B cell (primary cell): ENCODE measurements at regions of chr1 and their contacts with region 1.

Region 1: DNA sequence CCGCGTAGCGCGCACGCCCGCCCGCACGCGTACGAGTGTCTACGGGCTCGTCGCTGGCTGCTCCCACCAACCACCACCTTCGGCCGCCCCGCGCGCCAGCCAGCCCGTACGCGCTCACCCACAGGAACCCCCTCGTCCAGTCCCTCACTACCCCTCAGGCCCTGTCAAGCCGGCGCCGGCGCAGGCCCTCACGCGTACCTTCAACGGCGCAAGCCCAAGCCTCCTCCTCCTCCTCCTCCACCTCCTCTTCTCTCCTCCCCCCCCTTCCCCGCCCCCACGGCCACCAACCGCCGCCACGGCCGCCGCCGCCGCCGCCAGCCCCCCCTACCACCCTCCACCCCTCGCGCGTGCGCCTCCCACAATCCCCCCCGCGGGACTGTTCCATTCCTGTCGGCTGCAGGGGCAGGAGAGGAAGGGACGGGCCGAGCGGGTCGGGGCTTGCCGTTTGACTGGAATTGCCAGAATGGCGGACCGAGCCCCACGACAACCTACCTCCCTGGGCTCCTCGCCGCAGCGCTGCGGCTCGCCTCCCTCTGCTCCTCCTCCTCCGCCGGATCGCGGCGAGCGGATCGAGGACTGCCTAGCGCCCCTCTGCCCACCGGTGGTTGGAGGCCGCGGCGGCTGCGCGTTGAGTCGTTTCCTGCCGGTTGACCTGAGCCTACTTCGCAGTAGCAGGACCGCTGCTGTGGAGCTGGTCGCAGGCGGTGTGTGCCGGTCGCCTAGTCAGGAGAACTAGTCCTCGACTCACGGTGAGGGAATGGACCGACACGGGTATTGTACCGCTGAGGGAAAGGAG is at the start of gene ASH1L:
- DNase-seq: peak; percentile 98
- ATAC-seq: peak; percentile 76
- H3K4me3 ChIP-seq: peak within 1 kb of the TSS; percentile 83 to 96 (median 92)
- H3K4me3 Mint-ChIP-seq: peak within 1 kb of the TSS; percentile 99
- H3K27ac ChIP-seq: peak within 1 kb of the TSS; percentile 96 to 97
- H3K27ac Mint-ChIP-seq: peak within 1 kb of the TSS; percentile 98
- H3K4me1 ChIP-seq: peaks cover 19 to 27% of the 10 kb centered on the region in 2 donors
- H3K4me1 Mint-ChIP-seq: peaks cover 45% of the 10 kb centered on the region
- H3K27me3 ChIP-seq: no peaks in the 10 kb centered on the region
- H3K27me3 Mint-ChIP-seq: no peaks in the 10 kb centered on the region
- CTCF ChIP-seq: no peak
- total RNA-seq, gene ASH1L: 124 and 128 TPM in 2 replicates

Region 2: GRCh38 chr1:155479205-155479604 is 83.6 kb before region 1 on chr1:
- CTCF ChIA-PET with region 1: no interaction called
- POLR2A ChIA-PET with region 1: no interaction called
- intact Hi-C with region 1: no loop called
- DNase-seq: no peak
- ATAC-seq: peak; percentile 31
- H3K4me3 ChIP-seq: no peak overlapping the region
- H3K4me3 Mint-ChIP-seq: no peak overlapping the region
- H3K27ac ChIP-seq: no peak overlapping the region
- H3K27ac Mint-ChIP-seq: no peak overlapping the region
- H3K4me1 ChIP-seq: no peaks in the 10 kb centered on the region
- H3K4me1 Mint-ChIP-seq: peaks cover 19% of the 10 kb centered on the region
- H3K27me3 ChIP-seq: no peaks in the 10 kb centered on the region
- H3K27me3 Mint-ChIP-seq: no peaks in the 10 kb centered on the region
- CTCF ChIP-seq: no peak

Region 3: GRCh38 chr1:155527677-155528076 is 35.1 kb before region 1 on chr1:
- CTCF ChIA-PET with region 1: no interaction called
- POLR2A ChIA-PET with region 1: no interaction called
- intact Hi-C with region 1: loop called (anchors 2 kb)
- DNase-seq: no peak
- ATAC-seq: no peak
- H3K4me3 ChIP-seq: no peak overlapping the region
- H3K4me3 Mint-ChIP-seq: no peak overlapping the region
- H3K27ac ChIP-seq: no peak overlapping the region
- H3K27ac Mint-ChIP-seq: no peak overlapping the region
- H3K4me1 ChIP-seq: peaks cover 37 to 44% of the 10 kb centered on the region in 2 donors
- H3K4me1 Mint-ChIP-seq: peaks cover 49% of the 10 kb centered on the region
- H3K27me3 ChIP-seq: no peaks in the 10 kb centered on the region
- H3K27me3 Mint-ChIP-seq: no peaks in the 10 kb centered on the region
- CTCF ChIP-seq: no peak

Region 4: GRCh38 chr1:155809088-155809487 is 246.3 kb after region 1 on chr1:
- CTCF ChIA-PET with region 1: no interaction called
- POLR2A ChIA-PET with region 1: no interaction called
- intact Hi-C with region 1: no loop called
- DNase-seq: peak; percentile 28
- ATAC-seq: no peak
- H3K4me3 ChIP-seq: no peak overlapping the region
- H3K4me3 Mint-ChIP-seq: peak overlapping the region; percentile 62
- H3K27ac ChIP-seq: peak overlapping the region; percentile 36 to 69
- H3K27ac Mint-ChIP-seq: peak overlapping the region; percentile 27
- H3K4me1 ChIP-seq: peaks cover 12% of the 10 kb centered on the region in 2 donors
- H3K4me1 Mint-ChIP-seq: peaks cover 12% of the 10 kb centered on the region
- H3K27me3 ChIP-seq: no peaks in the 10 kb centered on the region
- H3K27me3 Mint-ChIP-seq: no peaks in the 10 kb centered on the region
- CTCF ChIP-seq: no peak

Region 5: DNA sequence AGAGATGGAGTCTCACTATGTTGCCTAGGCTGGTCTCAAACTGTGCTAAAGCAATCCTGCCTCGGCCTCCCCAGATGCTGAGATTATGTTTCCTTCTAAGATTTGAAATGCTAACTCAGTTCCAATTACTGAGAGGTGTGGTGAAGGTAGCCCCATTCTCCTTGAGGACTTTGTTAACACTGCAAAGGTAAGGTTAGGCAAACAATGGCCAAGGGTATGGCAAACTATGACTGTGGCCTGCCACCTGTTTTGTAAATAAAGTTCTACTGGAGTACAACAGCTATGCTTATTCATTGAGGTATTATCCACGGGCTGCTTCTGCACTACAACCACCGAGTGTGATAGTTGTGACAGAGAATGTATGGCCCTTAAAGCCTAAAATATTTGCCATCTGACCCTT is 357.9 kb after region 1 on chr1:
- CTCF ChIA-PET with region 1: no interaction called
- POLR2A ChIA-PET with region 1: no interaction called
- intact Hi-C with region 1: no loop called
- DNase-seq: no peak
- ATAC-seq: no peak
- H3K4me3 ChIP-seq: no peak overlapping the region
- H3K4me3 Mint-ChIP-seq: no peak overlapping the region
- H3K27ac ChIP-seq: no peak overlapping the region
- H3K27ac Mint-ChIP-seq: no peak overlapping the region
- H3K4me1 ChIP-seq: no peaks in the 10 kb centered on the region
- H3K4me1 Mint-ChIP-seq: no peaks in the 10 kb centered on the region
- H3K27me3 ChIP-seq: no peaks in the 10 kb centered on the region
- H3K27me3 Mint-ChIP-seq: no peaks in the 10 kb centered on the region
- CTCF ChIP-seq: no peak